Panc1 (cell line): ENCODE measurements at regions of chr1 and their contacts with region 1.

Region 1: DNA sequence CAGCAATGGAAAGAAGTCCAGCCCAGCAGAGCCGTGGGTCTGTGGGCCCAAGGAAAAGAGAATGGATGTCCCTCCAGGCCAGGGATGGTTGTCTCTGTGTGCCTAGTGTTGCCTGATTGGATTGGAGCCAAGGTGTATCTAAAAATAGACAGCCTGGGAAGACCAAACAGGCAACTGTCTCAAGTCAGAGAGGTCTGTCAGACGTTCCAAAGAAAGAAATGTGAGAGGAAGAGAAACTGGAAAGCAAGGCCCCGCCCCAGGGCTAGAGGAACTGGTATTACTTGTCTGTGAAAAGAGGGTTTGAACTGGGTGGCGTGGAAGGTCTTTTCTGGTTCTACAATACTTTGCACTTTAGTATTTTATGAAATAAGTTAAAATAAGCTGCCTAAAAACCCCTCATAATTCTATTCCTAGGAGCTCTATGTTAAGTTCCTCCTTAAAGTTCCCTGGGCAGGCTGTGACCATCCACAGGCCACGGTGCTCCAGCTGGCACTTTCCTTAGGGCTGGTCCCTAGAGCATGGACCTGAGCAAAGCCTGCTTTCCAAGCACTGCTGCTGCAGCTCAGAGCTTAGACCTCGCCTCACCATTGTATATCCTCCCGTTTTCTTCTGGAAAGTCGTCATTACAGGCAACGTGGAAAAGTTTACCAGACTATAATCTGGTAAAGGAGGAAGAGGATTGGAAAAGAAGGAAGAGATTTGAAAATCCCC is 151.6 kb downstream of the DISC1 start:
- DNase-seq: no peak
- ATAC-seq: 0 out of 2 replicates have a peak, but pooled peaks have one; percentile 58
- H3K4me3 ChIP-seq: no peak overlapping the region
- H3K27ac ChIP-seq: no peak overlapping the region
- H3K4me1 ChIP-seq: no peaks in the 10 kb centered on the region
- H3K27me3 ChIP-seq: no peaks in the 10 kb centered on the region
- CTCF ChIP-seq: no peak

Region 2: GRCh38 chr1:231757101-231757404 is 21.1 kb before region 1 on chr1:
- CTCF ChIA-PET with region 1: interaction called, 11 read pairs
- POLR2A ChIA-PET with region 1: no interaction called
- in situ Hi-C with region 1: no loop called
- intact Hi-C with region 1: no loop called
- DNase-seq: no peak
- ATAC-seq: peak; percentile 63
- H3K4me3 ChIP-seq: no peak overlapping the region
- H3K27ac ChIP-seq: no peak overlapping the region
- H3K4me1 ChIP-seq: no peaks in the 10 kb centered on the region
- H3K27me3 ChIP-seq: no peaks in the 10 kb centered on the region; the same call in 1 of the 2 replicates
- CTCF ChIP-seq: no peak; the same call in none of the 2 replicates

Region 3: DNA sequence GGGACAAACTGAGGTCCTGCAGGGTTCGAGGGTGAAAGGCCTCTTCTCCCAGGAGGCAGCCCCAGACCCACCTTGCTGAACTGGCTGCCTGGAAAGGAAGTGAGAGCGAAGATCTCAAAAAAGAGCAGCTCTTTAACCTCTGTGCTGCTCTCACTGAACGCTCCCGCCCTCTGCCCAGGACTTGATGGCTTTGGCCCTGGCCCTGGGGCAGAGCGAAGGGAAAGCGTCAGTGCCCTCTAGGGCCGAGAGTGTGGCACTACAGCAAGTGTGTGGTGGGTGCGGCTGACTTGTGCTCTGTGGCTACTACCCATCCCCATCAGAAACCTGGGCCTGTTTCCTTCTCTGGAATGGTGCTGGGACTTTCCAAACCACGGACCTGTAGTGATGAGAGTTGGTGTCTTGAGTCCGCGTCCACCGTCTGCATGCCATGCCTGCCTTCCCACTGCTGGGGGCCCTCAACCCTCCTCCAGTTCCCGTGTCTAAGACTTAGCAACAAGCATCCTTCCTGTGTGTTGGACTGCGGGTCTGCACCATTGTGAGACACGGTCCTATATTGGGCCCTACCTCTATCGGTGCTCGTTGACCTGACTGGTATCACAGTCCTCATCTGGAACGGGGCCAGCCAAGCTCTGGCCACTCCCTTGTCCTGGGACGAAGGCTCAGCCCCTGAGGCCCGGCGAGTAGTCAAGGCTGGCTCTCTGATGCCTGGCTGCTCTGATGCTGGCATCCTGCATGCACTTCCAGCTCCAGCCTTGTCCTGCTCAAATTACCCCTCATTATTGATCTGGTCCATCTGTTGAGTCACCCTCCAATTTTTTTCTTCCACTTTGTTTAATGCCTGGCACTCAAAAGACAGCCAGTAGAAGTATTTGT is 28.7 kb after region 1 on chr1:
- CTCF ChIA-PET with region 1: interaction called, 10 read pairs
- POLR2A ChIA-PET with region 1: no interaction called
- in situ Hi-C with region 1: no loop called
- intact Hi-C with region 1: no loop called
- DNase-seq: no peak
- ATAC-seq: peak; percentile 90
- H3K4me3 ChIP-seq: no peak overlapping the region
- H3K27ac ChIP-seq: no peak overlapping the region
- H3K4me1 ChIP-seq: no peaks in the 10 kb centered on the region
- H3K27me3 ChIP-seq: no peaks in the 10 kb centered on the region
- CTCF ChIP-seq: peak; percentile 59